Panc1 (cell line): ENCODE measurements at regions of chr11 and their contacts with region 1.

Region 1: GRCh38 chr11:47565340-47566148 is at the start of gene PTPMT1:
- DNase-seq: no peak
- ATAC-seq: peak; percentile 98
- H3K4me3 ChIP-seq: peak within 1 kb of the TSS; percentile 77 to 94
- H3K27ac ChIP-seq: peak within 1 kb of the TSS; percentile 89
- H3K4me1 ChIP-seq: peaks cover 4% of the 10 kb centered on the region; the same call in 1 of the 2 replicates
- H3K27me3 ChIP-seq: no peaks in the 10 kb centered on the region
- CTCF ChIP-seq: no peak
- total RNA-seq, gene PTPMT1: 81.0 TPM

Region 2: GRCh38 chr11:47373876-47374720 is 191.4 kb before region 1 on chr11:
- CTCF ChIA-PET with region 1: interaction called, 12 read pairs
- POLR2A ChIA-PET with region 1: no interaction called
- in situ Hi-C with region 1: no loop called
- intact Hi-C with region 1: no loop called
- DNase-seq: peak; percentile 33
- ATAC-seq: peak; percentile 95
- H3K4me3 ChIP-seq: no peak overlapping the region
- H3K27ac ChIP-seq: no peak overlapping the region
- H3K4me1 ChIP-seq: no peaks in the 10 kb centered on the region; the same call in 1 of the 2 replicates
- H3K27me3 ChIP-seq: no peaks in the 10 kb centered on the region
- CTCF ChIP-seq: peak; percentile 98

Region 3: GRCh38 chr11:47552056-47552565 is 13.4 kb before region 1 on chr11:
- CTCF ChIA-PET with region 1: no interaction called
- POLR2A ChIA-PET with region 1: interaction called, 11 read pairs
- in situ Hi-C with region 1: no loop called
- intact Hi-C with region 1: no loop called
- DNase-seq: no peak
- ATAC-seq: peak; percentile 31
- H3K4me3 ChIP-seq: peak overlapping the region; percentile 75 to 97
- H3K27ac ChIP-seq: peak overlapping the region; percentile 98
- H3K4me1 ChIP-seq: peaks cover 19% of the 10 kb centered on the region
- H3K27me3 ChIP-seq: no peaks in the 10 kb centered on the region
- CTCF ChIP-seq: no peak

Region 4: GRCh38 chr11:47593934-47594855 is 28.7 kb after region 1 on chr11 and contains the start of gene C1QTNF4:
- CTCF ChIA-PET with region 1: interaction called, 12 read pairs
- POLR2A ChIA-PET with region 1: no interaction called
- in situ Hi-C with region 1: no loop called
- intact Hi-C with region 1: no loop called
- DNase-seq: no peak
- ATAC-seq: peak; percentile 22; the same call in 1 of the 2 replicates
- H3K4me3 ChIP-seq: peak within 1 kb of the TSS; percentile 35 to 45
- H3K27ac ChIP-seq: no peak within 1 kb of the TSS
- H3K4me1 ChIP-seq: peaks cover 4% of the 10 kb centered on the region
- H3K27me3 ChIP-seq: peaks cover 6% of the 10 kb centered on the region; the same call in 1 of the 2 replicates
- CTCF ChIP-seq: no peak
- total RNA-seq, gene C1QTNF4: not detected

Region 5: GRCh38 chr11:47731475-47731874 is 165.9 kb after region 1 on chr11:
- CTCF ChIA-PET with region 1: no interaction called
- POLR2A ChIA-PET with region 1: no interaction called
- in situ Hi-C with region 1: no loop called
- intact Hi-C with region 1: no loop called
- DNase-seq: no peak
- ATAC-seq: no peak
- H3K4me3 ChIP-seq: no peak overlapping the region
- H3K27ac ChIP-seq: no peak overlapping the region
- H3K4me1 ChIP-seq: no peaks in the 10 kb centered on the region
- H3K27me3 ChIP-seq: no peaks in the 10 kb centered on the region
- CTCF ChIP-seq: no peak

Region 6: DNA sequence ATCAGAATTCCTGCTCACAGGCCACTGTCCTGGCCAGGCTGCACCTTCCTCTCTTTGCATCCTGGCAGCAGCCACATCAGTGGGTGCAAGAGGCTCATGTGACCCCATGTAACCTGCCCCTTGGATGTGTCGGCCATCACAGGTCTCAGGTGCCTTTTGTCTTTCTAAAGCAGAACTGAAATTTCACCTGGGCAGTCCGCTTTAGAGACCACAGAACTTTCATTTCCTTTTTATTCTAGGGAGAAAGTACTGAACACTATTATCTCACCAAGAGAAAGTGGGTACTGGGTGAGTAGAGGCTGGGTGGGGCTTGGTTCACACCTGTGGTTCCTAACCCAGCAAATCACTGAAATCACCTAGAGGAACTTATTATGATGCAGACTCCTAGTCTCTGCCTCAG is 334.3 kb after region 1 on chr11:
- CTCF ChIA-PET with region 1: no interaction called
- POLR2A ChIA-PET with region 1: no interaction called
- in situ Hi-C with region 1: no loop called
- intact Hi-C with region 1: no loop called
- DNase-seq: no peak
- ATAC-seq: peak; percentile 34; the same call in 1 of the 2 replicates
- H3K4me3 ChIP-seq: no peak overlapping the region
- H3K27ac ChIP-seq: no peak overlapping the region
- H3K4me1 ChIP-seq: no peaks in the 10 kb centered on the region
- H3K27me3 ChIP-seq: no peaks in the 10 kb centered on the region
- CTCF ChIP-seq: no peak